Activated CD8-positive, alpha-beta T cell treated with anti-CD3 and anti-CD28 coated beads, Interleukin-2, amount 10 ng/mL, durations not matched to agents 7 days and 5 days (primary cell): ENCODE measurements at regions of chr16 and their contacts with region 1.

Region 1: GRCh38 chr16:84617791-84618580 is at the start of gene COTL1:
- DNase-seq: peak; percentile 97
- ATAC-seq: peak; percentile 85
- H3K4me3 Mint-ChIP-seq: peak within 1 kb of the TSS; percentile 98
- H3K27ac Mint-ChIP-seq: peak within 1 kb of the TSS; percentile 88
- H3K4me1 Mint-ChIP-seq: peaks cover 58% of the 10 kb centered on the region
- H3K27me3 Mint-ChIP-seq: peaks cover 6% of the 10 kb centered on the region
- total RNA-seq, gene COTL1: 837 to 887 TPM

Region 2: DNA sequence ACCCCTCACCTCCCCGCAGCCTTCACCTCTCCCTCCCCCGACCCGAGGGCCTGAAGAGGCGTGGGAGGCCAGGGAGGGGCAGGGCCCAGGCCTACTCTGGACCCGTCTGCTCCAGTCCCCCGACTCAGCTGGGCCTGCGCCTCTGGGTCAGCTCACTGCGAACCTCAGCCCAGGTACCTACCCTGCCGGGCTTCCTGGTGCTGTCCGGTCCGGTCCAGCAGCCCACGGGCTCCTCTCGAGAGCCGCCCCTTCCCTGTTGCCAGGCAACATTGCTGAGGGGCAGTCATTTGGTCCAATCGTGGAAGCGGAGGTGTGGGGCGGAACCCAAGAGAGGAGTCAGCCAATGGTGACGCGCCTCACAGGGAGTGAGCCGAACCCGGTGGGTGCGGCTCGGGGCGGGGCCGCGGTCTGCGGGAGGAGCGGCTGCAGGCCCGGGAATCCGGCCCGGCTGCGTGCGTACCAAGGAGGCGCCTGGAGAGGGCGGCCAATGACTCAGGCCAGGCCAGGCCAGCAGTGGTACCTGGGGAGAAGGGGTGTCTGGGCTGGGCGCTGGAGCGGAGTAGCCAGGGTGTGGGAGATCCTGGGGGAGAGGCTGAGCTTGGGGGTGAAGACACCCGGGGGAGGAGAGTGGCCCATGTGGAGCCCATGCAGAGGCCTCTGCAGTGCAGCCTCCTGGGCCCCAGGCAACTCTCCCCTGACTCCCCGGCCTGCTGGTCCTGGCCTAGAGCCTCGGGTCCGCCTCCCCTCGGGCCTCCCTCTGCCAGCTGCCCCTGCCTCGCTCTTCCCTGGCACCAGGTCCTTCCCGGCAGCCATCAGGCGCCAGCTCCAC is 113.4 kb before region 1 on chr16 and contains the start of gene MEAK7:
- CTCF ChIA-PET with region 1: interaction called, 41 read pairs
- POLR2A ChIA-PET with region 1: interaction called, 3 read pairs
- DNase-seq: peak; percentile 98
- ATAC-seq: peak; percentile 94
- H3K4me3 Mint-ChIP-seq: peak within 1 kb of the TSS; percentile 82
- H3K27ac Mint-ChIP-seq: peak within 1 kb of the TSS; percentile 86
- H3K4me1 Mint-ChIP-seq: peaks cover 56% of the 10 kb centered on the region
- H3K27me3 Mint-ChIP-seq: no peaks in the 10 kb centered on the region
- total RNA-seq, gene MEAK7: 62.3 to 72.4 TPM

Region 3: DNA sequence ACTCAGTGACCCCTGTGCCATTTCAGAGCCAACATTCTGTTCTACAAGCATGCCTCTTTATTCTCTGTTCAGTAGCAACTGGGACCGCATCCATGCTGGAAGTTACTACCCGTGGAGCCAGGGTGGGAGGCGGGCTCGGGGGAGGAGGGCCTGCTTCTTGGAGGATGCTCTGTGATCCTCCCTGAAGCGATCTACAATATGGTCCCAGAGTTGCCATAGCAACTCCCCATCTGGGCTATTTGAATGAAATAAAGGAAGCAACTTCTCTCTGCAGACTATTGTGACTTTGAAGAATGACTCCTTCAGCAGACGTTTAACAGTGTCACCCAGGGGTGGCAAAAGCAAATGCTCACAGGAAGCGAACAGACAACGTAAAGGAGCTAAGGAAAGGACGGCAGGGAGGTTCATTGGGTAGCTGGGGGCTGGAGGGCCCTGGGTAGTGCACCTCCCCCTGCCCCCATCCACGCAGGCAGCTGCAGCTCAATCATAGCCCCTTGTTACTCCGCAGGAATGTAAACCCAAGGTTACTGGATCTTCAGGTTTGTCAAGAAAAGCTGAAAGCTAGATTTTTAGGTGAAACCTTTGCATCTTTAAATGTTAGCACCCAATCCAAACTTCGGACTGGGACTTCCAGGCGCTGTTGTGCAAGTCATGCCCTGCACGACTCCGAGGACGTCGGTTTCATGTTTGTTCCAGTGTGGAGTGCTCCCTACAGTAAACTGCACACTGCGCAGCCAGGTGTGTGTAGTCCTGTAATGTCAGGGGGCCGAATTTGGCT is 62.4 kb before region 1 on chr16:
- CTCF ChIA-PET with region 1: interaction called, 11 read pairs
- POLR2A ChIA-PET with region 1: interaction called, 35 read pairs
- DNase-seq: no peak
- ATAC-seq: no peak
- H3K4me3 Mint-ChIP-seq: no peak overlapping the region
- H3K27ac Mint-ChIP-seq: peak overlapping the region; percentile 53
- H3K4me1 Mint-ChIP-seq: peaks cover 35% of the 10 kb centered on the region
- H3K27me3 Mint-ChIP-seq: no peaks in the 10 kb centered on the region

Region 4: GRCh38 chr16:84599521-84600202 is 18.3 kb before region 1 on chr16:
- CTCF ChIA-PET with region 1: interaction called, 27 read pairs
- POLR2A ChIA-PET with region 1: interaction called, 13 read pairs
- DNase-seq: peak; percentile 63
- ATAC-seq: peak; percentile 21
- H3K4me3 Mint-ChIP-seq: peak overlapping the region; percentile 73
- H3K27ac Mint-ChIP-seq: peak overlapping the region; percentile 96
- H3K4me1 Mint-ChIP-seq: peaks cover 90% of the 10 kb centered on the region
- H3K27me3 Mint-ChIP-seq: no peaks in the 10 kb centered on the region

Region 5: GRCh38 chr16:84635699-84636098 is 17.7 kb after region 1 on chr16:
- CTCF ChIA-PET with region 1: interaction called, 26 read pairs
- POLR2A ChIA-PET with region 1: no interaction called
- DNase-seq: no peak
- ATAC-seq: no peak
- H3K4me3 Mint-ChIP-seq: no peak overlapping the region
- H3K27ac Mint-ChIP-seq: no peak overlapping the region
- H3K4me1 Mint-ChIP-seq: peaks cover 43% of the 10 kb centered on the region
- H3K27me3 Mint-ChIP-seq: peaks cover 26% of the 10 kb centered on the region

Region 6: DNA sequence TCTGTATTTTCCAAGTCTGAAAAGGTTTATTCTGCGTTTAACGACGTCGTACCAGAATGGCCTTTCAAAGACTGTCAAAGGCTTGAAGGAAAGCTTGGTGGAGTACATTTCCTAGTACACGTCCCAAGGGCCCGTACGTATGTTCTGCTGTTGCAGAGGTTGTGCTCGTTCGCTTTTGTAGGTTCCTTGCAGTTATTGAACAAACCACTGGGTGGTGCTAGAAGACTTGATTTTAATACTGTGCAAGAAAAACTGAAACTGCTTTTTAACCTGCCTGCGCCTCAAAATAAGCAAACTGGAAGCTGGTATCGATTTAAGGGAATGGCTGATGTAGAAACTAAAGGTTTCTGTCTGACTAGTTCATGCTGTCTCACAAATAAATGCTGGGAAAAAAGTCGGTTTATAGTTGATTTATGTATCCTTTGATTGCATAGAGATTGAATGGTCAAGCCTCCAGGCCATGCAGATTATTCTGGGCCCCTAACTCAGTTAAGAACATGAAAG is 136.4 kb after region 1 on chr16:
- CTCF ChIA-PET with region 1: interaction called, 14 read pairs
- POLR2A ChIA-PET with region 1: no interaction called
- DNase-seq: peak; percentile 87
- ATAC-seq: peak; percentile 86
- H3K4me3 Mint-ChIP-seq: peak overlapping the region; percentile 41
- H3K27ac Mint-ChIP-seq: no peak overlapping the region
- H3K4me1 Mint-ChIP-seq: peaks cover 62% of the 10 kb centered on the region
- H3K27me3 Mint-ChIP-seq: no peaks in the 10 kb centered on the region